Activated naive CD4-positive, alpha-beta T cell treated with anti-CD3 and anti-CD28 coated beads for 36 hours (primary cell): ENCODE measurements at regions of chr1 and their contacts with region 1.

Region 1: DNA sequence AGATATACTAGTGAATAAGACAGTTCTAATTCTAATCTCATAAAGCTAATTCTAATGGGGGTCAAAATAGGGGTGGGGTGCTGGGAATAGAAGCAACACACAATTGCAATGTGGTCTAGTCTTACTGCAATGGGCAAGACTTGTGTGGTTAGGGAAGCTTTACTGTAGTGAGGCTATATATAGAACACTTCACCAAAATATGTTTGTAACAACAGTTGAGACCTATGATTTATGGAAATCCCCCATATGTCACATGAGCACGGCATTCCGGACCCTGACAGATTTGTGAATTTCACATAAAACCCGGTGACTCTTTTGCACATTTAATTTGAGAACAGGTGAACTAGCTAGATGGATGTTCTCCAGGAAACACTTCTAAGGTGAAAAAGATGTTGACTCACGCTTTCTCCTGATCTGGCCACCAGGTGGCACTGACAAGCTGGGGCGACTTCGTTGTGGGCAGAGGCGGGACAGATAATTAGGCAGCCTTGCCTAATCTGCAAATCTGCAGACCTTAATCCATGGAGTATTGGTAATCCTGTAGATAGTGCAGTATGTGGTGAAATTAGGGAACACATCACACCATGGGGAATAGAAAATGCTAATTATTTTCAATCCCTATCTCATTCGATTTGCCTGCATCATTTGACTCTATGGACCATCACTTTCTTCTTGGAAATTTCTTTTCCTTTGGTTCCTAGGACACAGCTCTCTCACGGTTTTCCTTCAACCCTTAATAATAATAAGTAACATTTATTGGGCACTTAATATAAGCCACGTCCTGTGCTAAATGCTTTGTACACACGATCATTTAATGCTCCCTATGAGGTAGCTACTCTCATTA is 37.7 kb downstream of the KIAA0040 start:
- DNase-seq: peak; percentile 87
- H3K4me3 Mint-ChIP-seq: no peak overlapping the region
- H3K27ac Mint-ChIP-seq: no peak overlapping the region
- H3K4me1 Mint-ChIP-seq: peaks cover 24% of the 10 kb centered on the region
- H3K27me3 Mint-ChIP-seq: peaks cover 25% of the 10 kb centered on the region

Region 2: GRCh38 chr1:175138579-175138978 is 16.3 kb before region 1 on chr1:
- CTCF ChIA-PET with region 1: interaction called, 44 read pairs
- intact Hi-C with region 1: no loop called
- DNase-seq: no peak
- H3K4me3 Mint-ChIP-seq: no peak overlapping the region
- H3K27ac Mint-ChIP-seq: no peak overlapping the region
- H3K4me1 Mint-ChIP-seq: no peaks in the 10 kb centered on the region
- H3K27me3 Mint-ChIP-seq: peaks cover 11% of the 10 kb centered on the region

Region 3: DNA sequence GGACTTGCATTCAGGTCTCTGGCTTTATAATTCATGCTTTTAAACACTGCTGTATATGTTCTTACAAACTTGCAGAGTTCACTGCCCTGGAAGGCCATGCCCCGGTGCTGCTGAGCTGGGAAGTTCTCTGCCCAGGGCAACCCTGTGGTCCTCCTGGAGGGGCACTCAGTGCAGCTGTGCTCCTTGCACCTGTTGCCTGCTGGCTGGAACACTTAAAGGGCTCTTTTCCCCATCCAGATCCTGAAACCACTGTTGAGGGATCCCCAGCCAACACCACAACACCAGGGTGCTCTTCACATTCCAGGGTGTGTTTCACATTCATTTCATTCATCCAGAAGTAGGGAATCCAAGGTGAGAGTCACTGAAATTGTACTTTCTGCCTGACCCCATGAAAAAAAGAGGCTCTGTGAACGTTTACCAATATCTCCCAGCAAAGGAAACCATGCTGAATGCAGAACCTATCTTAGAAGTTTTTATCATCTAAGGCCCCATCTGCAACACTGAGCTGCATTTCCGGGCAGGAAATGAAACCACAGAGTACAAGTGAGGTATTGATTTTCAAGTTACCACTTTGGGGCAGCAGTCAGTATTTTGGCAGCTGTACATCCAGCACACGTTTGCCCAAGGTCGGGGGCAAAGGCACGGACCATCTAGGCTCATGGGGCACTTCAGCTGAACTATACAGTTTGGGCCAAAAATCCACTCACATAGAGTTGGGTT is 54.1 kb after region 1 on chr1:
- CTCF ChIA-PET with region 1: interaction called, 12 read pairs
- intact Hi-C with region 1: loop called (anchors 5 kb)
- DNase-seq: peak; percentile 74
- H3K4me3 Mint-ChIP-seq: peak overlapping the region; percentile 51
- H3K27ac Mint-ChIP-seq: peak overlapping the region; percentile 92
- H3K4me1 Mint-ChIP-seq: peaks cover 62% of the 10 kb centered on the region
- H3K27me3 Mint-ChIP-seq: no peaks in the 10 kb centered on the region

Region 4: GRCh38 chr1:175338387-175339135 is 183.7 kb after region 1 on chr1:
- CTCF ChIA-PET with region 1: interaction called, 32 read pairs
- intact Hi-C with region 1: loop called (anchors 1 kb)
- DNase-seq: peak; percentile 76
- H3K4me3 Mint-ChIP-seq: no peak overlapping the region
- H3K27ac Mint-ChIP-seq: no peak overlapping the region
- H3K4me1 Mint-ChIP-seq: peaks cover 2% of the 10 kb centered on the region
- H3K27me3 Mint-ChIP-seq: no peaks in the 10 kb centered on the region

Region 5: DNA sequence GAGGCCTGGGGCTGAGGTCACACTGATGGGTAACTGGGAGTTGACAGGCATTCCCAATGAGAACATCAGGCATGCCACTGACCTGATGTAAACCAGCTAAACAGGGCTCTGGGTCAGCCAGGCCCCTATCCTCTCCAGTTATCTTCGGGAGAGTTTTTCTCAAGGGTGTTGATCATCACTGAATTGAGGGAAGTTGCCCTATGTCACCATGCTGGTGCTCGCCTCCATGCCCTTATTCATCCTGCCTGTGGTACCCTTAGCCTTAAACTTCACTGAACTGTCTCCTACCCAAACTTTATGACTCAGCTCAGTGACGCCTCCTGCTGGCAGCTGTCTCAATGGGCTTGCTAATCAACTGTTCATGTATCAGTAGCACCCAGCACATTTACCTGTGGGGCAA is 669.2 kb after region 1 on chr1:
- CTCF ChIA-PET with region 1: interaction called, 3 read pairs
- intact Hi-C with region 1: loop called (anchors 1 kb)
- DNase-seq: peak; percentile 59
- H3K4me3 Mint-ChIP-seq: no peak overlapping the region
- H3K27ac Mint-ChIP-seq: no peak overlapping the region
- H3K4me1 Mint-ChIP-seq: no peaks in the 10 kb centered on the region
- H3K27me3 Mint-ChIP-seq: peaks cover 10% of the 10 kb centered on the region